ENCODE measurements at regions of chr1 and their contacts with region 1.

Region 1: GRCh38 chr1:70376196-70376595 is 21.7 kb upstream of the ANKRD13C start:
- DNase-seq: no peak
- ATAC-seq: no peak
- H3K4me3 ChIP-seq: no peak overlapping the region
- H3K4me3 Mint-ChIP-seq: no peak overlapping the region
- H3K27ac ChIP-seq: no peak overlapping the region
- H3K27ac Mint-ChIP-seq: no peak overlapping the region
- H3K4me1 ChIP-seq: no peaks in the 10 kb centered on the region
- H3K4me1 Mint-ChIP-seq: peaks cover 0 to 4% (median 0%) of the 10 kb centered on the region in 7 donors
- H3K27me3 ChIP-seq: no peaks in the 10 kb centered on the region
- H3K27me3 Mint-ChIP-seq: no peaks in the 10 kb centered on the region

Region 2: DNA sequence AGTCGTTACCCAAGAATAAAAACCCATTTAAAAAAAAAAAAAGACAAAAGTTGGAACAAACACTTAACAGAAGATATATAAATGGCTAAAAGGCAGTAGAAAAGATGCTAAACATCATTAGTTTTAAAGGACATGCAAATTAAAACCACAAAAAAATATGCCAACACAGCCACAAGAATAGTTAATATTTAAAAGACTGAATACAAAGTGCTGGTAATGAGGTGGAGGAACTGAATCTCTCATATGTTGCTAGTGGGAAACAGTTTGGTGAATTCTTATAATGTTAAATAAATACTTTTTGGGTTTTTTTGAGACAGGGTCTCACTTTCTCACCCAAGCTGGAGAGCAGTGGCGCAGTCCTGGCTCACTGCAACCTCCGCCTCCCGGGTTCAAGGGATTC is 180.9 kb before region 1 on chr1:
- CTCF ChIA-PET with region 1: no interaction called
- POLR2A ChIA-PET with region 1: interaction called, 12 read pairs
- intact Hi-C with region 1: no loop called
- DNase-seq: no peak
- ATAC-seq: no peak
- H3K4me3 ChIP-seq: no peak overlapping the region
- H3K4me3 Mint-ChIP-seq: no peak overlapping the region
- H3K27ac ChIP-seq: no peak overlapping the region
- H3K27ac Mint-ChIP-seq: no peak overlapping the region
- H3K4me1 ChIP-seq: no peaks in the 10 kb centered on the region
- H3K4me1 Mint-ChIP-seq: peaks cover 2 to 37% (median 25%) of the 10 kb centered on the region in 7 donors
- H3K27me3 ChIP-seq: no peaks in the 10 kb centered on the region
- H3K27me3 Mint-ChIP-seq: no peaks in the 10 kb centered on the region